ENCODE measurements at regions of chr1 and their contacts with region 1.

Region 1: DNA sequence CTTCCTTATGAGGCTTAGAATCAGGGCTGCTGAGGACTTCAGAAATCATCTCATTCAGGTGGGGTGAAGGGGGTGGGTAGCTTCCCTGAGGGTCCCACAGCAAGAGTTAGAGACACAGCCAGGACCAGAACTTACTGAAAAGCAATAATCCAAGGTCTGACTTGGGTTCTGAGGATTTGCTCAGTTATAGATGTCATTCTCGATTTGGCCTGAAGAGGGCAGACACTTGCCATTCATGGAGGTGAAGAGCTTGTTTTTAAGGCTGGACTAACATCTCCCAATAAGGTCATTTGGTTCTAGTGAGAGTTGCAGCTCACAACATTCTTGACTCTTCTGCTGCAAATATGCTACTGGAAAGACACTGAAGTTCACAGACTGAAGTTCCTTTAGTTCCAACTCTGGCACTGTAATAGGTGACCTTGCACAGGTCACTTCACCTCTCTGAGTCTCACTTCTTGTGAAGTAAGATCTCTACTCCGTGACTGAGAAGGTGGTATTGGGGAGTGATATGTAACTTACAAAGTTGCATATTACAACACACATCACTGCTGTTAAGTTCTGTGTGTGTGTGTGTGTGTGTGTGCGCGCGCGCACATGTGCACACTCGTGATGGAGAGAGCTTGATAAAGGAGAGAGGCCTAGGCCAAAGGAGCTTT is 69.8 kb upstream of the DIRAS3 start:
- DNase-seq: peak; percentile 67

Region 2: GRCh38 chr1:67561704-67562113 is 558.6 kb before region 1 on chr1:
- in situ Hi-C with region 1: loop called (anchors 25 kb)
- DNase-seq: peak; percentile 75

Region 3: GRCh38 chr1:68000191-68000590 is 120.1 kb before region 1 on chr1:
- in situ Hi-C with region 1: no loop called
- DNase-seq: no peak

Region 4: GRCh38 chr1:68028566-68028965 is 91.7 kb before region 1 on chr1:
- in situ Hi-C with region 1: no loop called
- DNase-seq: no peak

Region 5: GRCh38 chr1:68074472-68074871 is 45.8 kb before region 1 on chr1:
- in situ Hi-C with region 1: no loop called
- DNase-seq: no peak

Region 6: DNA sequence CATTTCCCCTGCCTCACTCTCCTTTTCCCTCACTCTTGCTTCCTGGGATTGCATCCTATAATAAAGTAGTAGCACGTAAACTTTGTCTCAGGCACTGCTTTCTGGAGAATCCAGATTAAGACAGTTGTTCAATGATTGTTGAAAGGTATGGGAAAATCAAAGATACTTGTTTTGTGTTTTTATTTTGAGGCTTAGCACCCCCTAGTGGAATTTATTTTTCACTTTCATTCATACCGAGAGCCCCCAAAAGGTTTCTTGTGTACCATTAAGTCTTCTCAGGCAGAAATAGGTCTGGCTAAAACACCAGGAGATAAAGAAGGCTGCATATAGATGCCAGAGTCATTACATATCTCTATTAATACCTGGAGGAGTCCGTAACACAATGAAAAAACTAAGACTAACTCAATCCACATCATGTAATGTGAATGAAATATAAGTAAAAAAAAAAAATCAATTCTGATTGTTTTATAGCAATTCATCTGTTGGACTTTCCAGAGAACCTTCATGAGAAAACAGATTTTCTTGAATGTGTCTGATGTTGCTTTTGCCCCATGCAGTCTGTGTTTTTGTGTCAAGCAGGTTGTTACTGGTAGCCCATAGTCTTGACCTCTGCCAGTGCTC is 226.0 kb after region 1 on chr1:
- in situ Hi-C with region 1: loop called (anchors 25 kb)
- DNase-seq: peak; percentile 57

Measured in KBM-7 (cell line).